H1 (cell line): ENCODE measurements at regions of chr12 and their contacts with region 1.

Region 1: DNA sequence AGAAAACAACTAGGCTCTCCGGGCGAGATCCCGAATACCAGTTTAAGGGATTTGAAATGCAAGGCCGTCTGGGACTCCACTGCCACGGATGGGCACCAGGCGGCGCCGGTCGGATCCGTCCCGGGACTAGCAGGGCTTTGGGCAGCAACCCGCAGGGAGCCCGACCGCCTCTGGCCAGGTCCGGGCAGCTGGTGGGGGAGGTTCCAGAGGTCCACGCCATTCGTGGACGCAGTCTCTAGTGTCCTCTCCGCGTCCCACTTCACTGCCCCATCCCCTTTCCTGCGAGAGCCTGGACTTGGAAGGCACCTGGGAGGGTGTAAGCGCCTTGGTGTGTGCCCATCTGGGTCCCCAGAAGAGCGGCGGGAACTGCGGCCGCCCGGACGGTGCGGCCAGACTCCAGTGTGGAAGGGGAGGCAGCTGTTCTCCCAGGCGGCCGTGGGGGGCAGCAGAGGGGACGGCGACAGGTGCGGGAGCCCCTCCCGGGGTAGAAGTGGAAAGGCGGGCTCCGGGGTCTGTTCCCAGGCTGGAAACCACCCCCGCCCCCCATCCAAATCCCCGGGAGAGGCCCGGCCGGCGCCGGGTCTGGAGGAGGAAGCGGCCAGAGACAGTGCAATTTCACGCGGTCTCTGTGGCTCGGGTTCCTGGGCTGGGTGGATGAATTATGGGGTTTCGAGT is 838 bp upstream of the ERBB3 start:
- DNase-seq: peak; percentile 82 to 98
- H3K4me3 ChIP-seq: peak overlapping the region; percentile 74 to 89 (median 80)
- H3K27ac ChIP-seq: peak overlapping the region; percentile 92
- H3K4me1 ChIP-seq: peaks cover 3 to 17% (median 11%) of the 10 kb centered on the region in 4 experiments
- H3K27me3 ChIP-seq: no peaks in the 10 kb centered on the region
- CTCF ChIP-seq: peak; percentile 73 to 81 (median 78)
- EP300 ChIP-seq: 0 out of 3 replicates have a peak, but pooled peaks of 1 of the 2 experiments have one; percentile 38
- POLR2A ChIP-seq: peak in 1 of 2 experiments; percentile 84; a peak in 2 of 3 replicates
- RAD21 ChIP-seq: peak; percentile 35 to 51; a peak in 3 of 4 replicates

Region 2: DNA sequence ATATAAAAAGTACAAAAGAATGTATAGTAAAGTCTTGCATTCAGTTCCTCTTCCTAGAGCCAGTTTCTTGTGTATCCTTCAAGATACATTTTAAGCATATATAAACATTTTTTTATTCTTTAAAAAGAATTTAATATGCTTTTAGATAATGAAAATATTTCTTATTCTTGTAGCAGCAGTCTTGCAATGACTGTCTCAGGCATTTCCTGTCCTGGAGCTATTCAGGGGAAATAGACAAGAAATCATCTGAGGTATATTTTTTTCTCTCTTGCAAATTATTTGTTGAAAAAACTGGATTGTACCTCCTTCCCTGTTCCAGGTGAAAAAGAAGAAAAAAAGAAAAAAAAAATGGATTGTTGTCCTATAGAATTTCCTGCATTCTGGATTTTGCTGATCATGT is 16.1 kb before region 1 on chr12:
- CTCF ChIA-PET with region 1: interaction called, 10 read pairs
- POLR2A ChIA-PET with region 1: interaction called, 6 read pairs
- DNase-seq: no peak
- H3K4me3 ChIP-seq: no peak overlapping the region
- H3K27ac ChIP-seq: no peak overlapping the region
- H3K4me1 ChIP-seq: no peaks in the 10 kb centered on the region
- H3K27me3 ChIP-seq: no peaks in the 10 kb centered on the region
- CTCF ChIP-seq: no peak
- EP300 ChIP-seq: no peak
- POLR2A ChIP-seq: no peak
- RAD21 ChIP-seq: no peak

Region 3: GRCh38 chr12:56098592-56098991 is 19.5 kb after region 1 on chr12:
- CTCF ChIA-PET with region 1: interaction called, 38 read pairs
- POLR2A ChIA-PET with region 1: interaction called, 112 read pairs
- DNase-seq: no peak
- H3K4me3 ChIP-seq: no peak overlapping the region
- H3K27ac ChIP-seq: no peak overlapping the region
- H3K4me1 ChIP-seq: no peaks in the 10 kb centered on the region
- H3K27me3 ChIP-seq: no peaks in the 10 kb centered on the region
- CTCF ChIP-seq: no peak
- EP300 ChIP-seq: no peak
- POLR2A ChIP-seq: no peak
- RAD21 ChIP-seq: no peak

Region 4: GRCh38 chr12:56104109-56104814 is 25.1 kb after region 1 on chr12 and contains the start of gene PA2G4:
- CTCF ChIA-PET with region 1: interaction called, 31 read pairs
- POLR2A ChIA-PET with region 1: interaction called, 112 read pairs
- DNase-seq: peak; percentile 95 to 99
- H3K4me3 ChIP-seq: peak within 1 kb of the TSS; percentile 81 to 95 (median 92)
- H3K27ac ChIP-seq: peak within 1 kb of the TSS; percentile 88; the same call in 1 of the 2 replicates
- H3K4me1 ChIP-seq: peaks cover 0 to 9% (median 3%) of the 10 kb centered on the region in 4 experiments; a peak in 5 of 7 replicates
- H3K27me3 ChIP-seq: no peaks in the 10 kb centered on the region
- CTCF ChIP-seq: no peak
- EP300 ChIP-seq: no peak
- POLR2A ChIP-seq: peak; percentile 69 to 70; a peak in 2 of 3 replicates
- RAD21 ChIP-seq: no peak
- total RNA-seq, gene PA2G4: 237 and 242 TPM in 2 replicates

Region 5: DNA sequence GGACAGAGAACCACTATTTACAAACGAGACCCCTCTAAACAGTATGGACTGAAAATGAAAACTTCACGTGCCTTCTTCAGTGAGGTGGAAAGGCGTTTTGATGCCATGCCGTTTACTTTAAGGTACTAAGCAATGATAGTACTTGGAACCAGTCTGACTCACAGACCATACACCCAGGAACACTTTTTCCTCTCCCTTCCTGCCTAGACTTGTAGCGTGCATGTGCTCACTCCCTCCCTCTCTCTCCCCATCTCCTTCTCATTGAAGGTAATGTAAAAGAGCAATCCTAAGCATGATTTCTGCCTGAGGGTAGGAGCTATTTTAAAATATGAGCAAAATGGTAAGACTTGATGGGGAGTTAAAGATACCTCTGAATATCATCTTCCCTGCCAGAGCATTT is 31.4 kb after region 1 on chr12:
- CTCF ChIA-PET with region 1: interaction called, 31 read pairs
- POLR2A ChIA-PET with region 1: interaction called, 112 read pairs
- DNase-seq: no peak
- H3K4me3 ChIP-seq: no peak overlapping the region
- H3K27ac ChIP-seq: no peak overlapping the region
- H3K4me1 ChIP-seq: peaks cover 0 to 6% (median 2%) of the 10 kb centered on the region in 4 experiments; a peak in 5 of 7 replicates
- H3K27me3 ChIP-seq: no peaks in the 10 kb centered on the region
- CTCF ChIP-seq: no peak
- EP300 ChIP-seq: no peak
- POLR2A ChIP-seq: no peak
- RAD21 ChIP-seq: no peak